Heart left ventricle (tissue), 16 donors: ENCODE measurements at regions of chr10 and their contacts with region 1.

Region 1: DNA sequence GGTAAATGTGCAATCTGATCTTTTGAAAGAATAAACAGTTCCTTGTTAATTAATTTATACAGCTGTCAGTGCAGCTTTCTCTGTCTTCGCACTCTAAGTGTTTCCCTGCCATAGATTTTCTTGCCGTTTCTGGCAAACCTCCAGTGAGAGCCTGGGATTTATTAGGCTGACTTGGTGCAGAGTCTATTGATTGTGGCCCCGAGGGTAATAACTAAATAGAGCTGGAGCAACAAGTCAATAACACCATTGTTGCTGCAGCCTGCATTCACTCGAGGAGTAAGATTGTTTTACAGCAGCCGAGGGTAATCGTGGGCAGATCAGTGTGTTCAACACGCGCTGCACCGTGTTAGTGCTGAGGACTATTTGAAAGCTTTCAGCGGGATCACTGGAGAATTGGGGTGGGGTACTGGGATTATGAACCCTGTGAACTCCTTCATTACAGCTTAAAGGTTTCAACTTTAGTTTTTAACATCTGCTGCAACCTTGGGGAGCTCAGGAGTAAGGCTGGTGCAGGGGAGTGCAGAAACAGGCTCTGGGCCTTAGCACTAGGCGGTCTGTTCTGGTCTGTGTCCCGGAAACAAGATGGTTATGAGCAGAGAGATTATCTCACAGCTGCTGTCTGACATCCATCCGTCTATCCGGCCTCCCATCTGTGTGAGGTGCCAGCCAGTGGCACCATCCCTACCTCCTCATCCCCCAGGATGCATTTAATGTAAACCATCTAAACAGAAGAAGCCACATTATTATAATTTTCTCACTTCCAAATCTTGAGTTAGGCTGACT is 174.0 kb upstream of the TCF7L2 start:
- DNase-seq: no peak
- ATAC-seq: no peak
- H3K4me3 ChIP-seq: no peak overlapping the region
- H3K27ac ChIP-seq: no peak overlapping the region
- H3K4me1 ChIP-seq: peaks cover 0 to 10% (median 0%) of the 10 kb centered on the region in 12 donors
- H3K27me3 ChIP-seq: no peaks in the 10 kb centered on the region
- CTCF ChIP-seq: no peak
- POLR2A ChIP-seq: no peak

Region 2: DNA sequence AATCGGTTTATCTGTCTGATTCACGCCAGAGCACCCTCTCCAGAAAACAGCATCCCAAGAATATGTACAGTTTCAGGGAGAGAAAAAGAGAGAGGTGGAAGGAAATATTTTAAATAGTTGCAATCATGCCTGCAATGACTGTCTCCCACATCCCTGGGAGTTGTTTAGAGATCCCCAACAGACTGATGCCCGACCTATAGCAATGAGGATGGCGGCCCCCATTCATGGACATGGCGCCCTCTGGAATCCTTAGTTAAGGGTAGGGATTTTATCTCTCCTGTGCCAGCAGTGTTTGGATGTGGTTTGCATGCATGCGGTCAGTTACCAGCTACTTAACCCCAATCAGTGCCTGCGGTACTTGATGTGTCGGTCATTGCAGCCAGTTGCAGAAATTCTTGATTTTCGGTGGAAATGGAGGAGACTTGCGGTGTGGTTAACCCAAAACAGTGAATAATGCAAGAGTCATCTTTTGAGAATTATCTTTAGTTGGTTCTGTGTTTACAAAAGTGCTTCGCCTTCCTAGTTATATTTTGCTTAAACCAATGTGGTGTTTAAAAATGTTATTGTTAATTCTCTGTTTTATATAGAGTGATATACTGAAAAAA is 12.1 kb before region 1 on chr10:
- intact Hi-C with region 1: loop called in 1 of 10 experiments (anchors 1 kb)
- DNase-seq: no peak
- ATAC-seq: no peak
- H3K4me3 ChIP-seq: no peak overlapping the region
- H3K27ac ChIP-seq: no peak overlapping the region
- H3K4me1 ChIP-seq: no peaks in the 10 kb centered on the region
- H3K27me3 ChIP-seq: no peaks in the 10 kb centered on the region
- CTCF ChIP-seq: no peak
- POLR2A ChIP-seq: no peak

Region 3: GRCh38 chr10:112792487-112793201 is 16.6 kb after region 1 on chr10:
- intact Hi-C with region 1: no loop called
- DNase-seq: peak in 3 of 5 donors; percentile 18 to 58 (median 55)
- ATAC-seq: peak; percentile 73 to 89 (median 80)
- H3K4me3 ChIP-seq: peak overlapping the region in 4 of 12 donors; percentile 5 to 17 (median 14)
- H3K27ac ChIP-seq: peak overlapping the region in 1 of 12 donors; percentile 6
- H3K4me1 ChIP-seq: peaks cover 0 to 9% (median 3%) of the 10 kb centered on the region in 12 donors
- H3K27me3 ChIP-seq: no peaks in the 10 kb centered on the region
- CTCF ChIP-seq: no peak
- POLR2A ChIP-seq: no peak